Dendritic cell treated with granulocyte-macrophage colony-stimulating factor and Interleukin-4, amounts not matched to agents 40 ng/mL and 50 ng/mL, for 4 days (primary cell): ENCODE measurements at regions of chr11 and their contacts with region 1.

Region 1: GRCh38 chr11:83285771-83286528 is at the start of gene CCDC90B:
- H3K4me3 Mint-ChIP-seq: peak within 1 kb of the TSS; percentile 97
- H3K27ac Mint-ChIP-seq: peak within 1 kb of the TSS; percentile 100
- H3K4me1 Mint-ChIP-seq: peaks cover 32% of the 10 kb centered on the region
- H3K27me3 Mint-ChIP-seq: no peaks in the 10 kb centered on the region

Region 2: DNA sequence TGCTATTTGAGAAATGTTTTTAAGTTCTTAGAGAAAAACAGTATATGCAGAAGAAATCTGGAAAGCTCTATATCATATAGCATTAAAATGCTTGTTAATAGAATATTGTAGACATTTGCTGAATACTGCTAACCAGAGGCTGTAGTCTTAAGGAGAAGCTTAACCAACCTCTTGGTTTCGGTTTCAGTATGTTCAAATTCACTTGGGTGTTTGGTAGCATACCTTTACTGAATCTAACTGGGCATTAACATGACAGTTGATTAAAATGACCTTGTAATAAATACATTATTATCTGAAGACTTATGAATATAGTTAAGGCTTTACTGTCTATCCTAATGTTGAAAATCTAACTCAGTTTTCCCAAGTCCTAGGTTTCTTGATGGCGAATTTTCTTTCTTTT is 123.6 kb before region 1 on chr11:
- intact Hi-C with region 1: loop called (anchors 10 kb)
- H3K4me3 Mint-ChIP-seq: no peak overlapping the region
- H3K27ac Mint-ChIP-seq: no peak overlapping the region
- H3K4me1 Mint-ChIP-seq: peaks cover 41% of the 10 kb centered on the region
- H3K27me3 Mint-ChIP-seq: no peaks in the 10 kb centered on the region

Region 3: DNA sequence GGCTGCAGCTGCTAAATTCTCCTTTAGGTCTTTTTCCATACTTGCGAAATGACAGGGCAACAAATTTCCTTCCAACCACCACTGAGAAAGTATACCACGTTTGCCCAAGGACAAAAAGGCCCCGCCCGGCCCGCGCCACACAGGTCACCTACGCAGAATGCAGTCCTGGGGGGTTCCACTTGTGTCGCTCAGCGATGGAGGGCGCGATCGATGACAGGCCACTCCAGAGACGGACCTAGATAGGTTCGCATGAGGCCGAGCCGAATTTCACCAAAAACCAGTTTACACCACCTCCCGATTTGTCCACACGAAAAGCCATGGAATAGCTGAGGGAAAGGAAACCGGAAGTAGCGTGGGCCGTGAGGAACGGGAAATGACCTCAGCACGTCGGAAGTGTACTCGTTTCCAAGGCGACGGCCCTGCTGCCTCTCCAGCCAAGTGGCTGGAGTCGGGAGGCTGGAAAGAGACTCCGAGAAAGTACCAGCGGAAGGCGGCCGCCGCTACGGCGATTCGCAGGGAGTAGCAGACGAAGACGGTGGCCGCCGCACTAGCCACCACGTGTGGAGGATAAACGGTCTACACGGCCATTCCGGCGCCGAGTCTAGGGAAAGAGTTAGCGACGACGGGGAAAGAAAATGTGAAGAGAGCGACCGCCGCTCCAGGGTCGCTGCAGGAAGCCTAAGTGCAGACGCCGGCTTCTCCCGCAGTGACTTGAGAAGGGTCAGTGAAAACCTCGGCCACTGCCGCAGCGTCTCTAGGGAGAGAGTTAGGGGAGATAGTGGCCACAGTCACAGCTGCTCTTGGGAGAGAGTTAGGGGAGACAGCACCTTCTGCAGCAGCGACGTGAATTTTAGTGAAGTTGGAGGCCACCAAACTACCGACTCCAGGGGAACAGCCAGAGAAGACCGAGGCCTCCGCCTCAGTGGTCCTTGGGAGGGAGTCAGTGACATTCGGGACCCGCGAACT is 92.4 kb before region 1 on chr11 and contains the start of gene ANKRD42:
- intact Hi-C with region 1: loop called (anchors 2 kb)
- H3K4me3 Mint-ChIP-seq: peak within 1 kb of the TSS; percentile 99
- H3K27ac Mint-ChIP-seq: peak within 1 kb of the TSS; percentile 95
- H3K4me1 Mint-ChIP-seq: peaks cover 38% of the 10 kb centered on the region
- H3K27me3 Mint-ChIP-seq: no peaks in the 10 kb centered on the region

Region 4: GRCh38 chr11:83374311-83374710 is 88.4 kb after region 1 on chr11:
- intact Hi-C with region 1: no loop called
- H3K4me3 Mint-ChIP-seq: no peak overlapping the region
- H3K27ac Mint-ChIP-seq: no peak overlapping the region
- H3K4me1 Mint-ChIP-seq: no peaks in the 10 kb centered on the region
- H3K27me3 Mint-ChIP-seq: no peaks in the 10 kb centered on the region